WTC11 (cell line): ENCODE measurements at regions of chr14 and their contacts with region 1.

Region 1: GRCh38 chr14:53963320-53964227 is 6.9 kb upstream of the BMP4 start:
- DNase-seq: peak; percentile 55
- ATAC-seq: peak; percentile 68
- H3K4me3 Mint-ChIP-seq: peak overlapping the region; percentile 77
- H3K27ac Mint-ChIP-seq: no peak overlapping the region
- H3K4me1 Mint-ChIP-seq: peaks cover 41% of the 10 kb centered on the region
- H3K27me3 Mint-ChIP-seq: peaks cover 74% of the 10 kb centered on the region
- CTCF ChIP-seq: no peak

Region 2: GRCh38 chr14:53894456-53894855 is 69.1 kb before region 1 on chr14:
- CTCF ChIA-PET with region 1: no interaction called
- POLR2A ChIA-PET with region 1: no interaction called
- DNase-seq: no peak
- ATAC-seq: no peak
- H3K4me3 Mint-ChIP-seq: no peak overlapping the region
- H3K27ac Mint-ChIP-seq: no peak overlapping the region
- H3K4me1 Mint-ChIP-seq: peaks cover 17% of the 10 kb centered on the region
- H3K27me3 Mint-ChIP-seq: peaks cover 2% of the 10 kb centered on the region; the same call in 1 of the 2 replicates
- CTCF ChIP-seq: no peak

Region 3: DNA sequence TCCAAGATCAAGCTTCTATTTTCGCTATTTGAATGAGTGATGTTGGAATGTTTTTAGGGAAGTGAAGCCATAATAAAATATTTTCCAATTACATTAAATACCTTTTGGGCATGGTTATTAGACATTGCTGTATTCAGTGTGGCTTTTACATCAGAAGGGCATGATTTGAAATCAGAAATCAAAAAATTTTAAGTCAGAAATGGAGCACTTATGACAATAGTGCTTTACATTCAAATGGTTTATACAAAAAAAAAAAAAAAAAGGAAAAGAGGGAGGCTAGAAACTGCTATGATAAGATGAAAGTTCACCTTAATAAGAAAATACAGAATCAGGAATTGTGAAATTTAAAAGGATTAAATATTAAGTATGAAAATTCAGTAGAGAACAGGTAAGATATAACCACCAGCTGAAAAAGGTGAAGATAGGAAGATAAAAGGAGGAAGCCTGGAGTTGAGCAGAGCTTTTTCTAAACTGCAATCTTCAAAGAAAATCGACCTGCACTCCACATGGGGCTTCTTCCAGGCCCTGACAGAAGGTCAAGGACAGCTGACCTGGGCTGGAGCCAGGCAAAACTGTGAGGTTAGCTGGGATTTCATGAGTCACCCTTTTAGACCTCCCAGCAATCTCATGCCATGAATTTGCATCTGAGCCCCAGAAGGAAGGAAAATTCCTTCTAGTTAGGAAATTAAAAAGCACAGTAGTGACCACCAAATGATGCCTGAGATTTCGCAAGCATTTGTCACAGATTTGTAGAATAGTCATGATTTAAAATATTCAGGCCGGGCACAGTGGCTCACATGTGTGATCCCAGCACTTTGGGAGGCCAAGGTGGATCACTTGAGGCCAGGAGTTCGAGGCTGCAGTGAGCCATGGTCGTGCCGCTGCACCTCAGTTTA is 16.4 kb after region 1 on chr14:
- CTCF ChIA-PET with region 1: interaction called, 12 read pairs
- POLR2A ChIA-PET with region 1: no interaction called
- DNase-seq: peak; percentile 47
- ATAC-seq: peak; percentile 46
- H3K4me3 Mint-ChIP-seq: no peak overlapping the region; the same call in 1 of the 2 replicates
- H3K27ac Mint-ChIP-seq: peak overlapping the region; percentile 34; the same call in 1 of the 2 replicates
- H3K4me1 Mint-ChIP-seq: peaks cover 66% of the 10 kb centered on the region
- H3K27me3 Mint-ChIP-seq: peaks cover 40% of the 10 kb centered on the region
- CTCF ChIP-seq: no peak

Region 4: GRCh38 chr14:54133896-54134295 is 170.3 kb after region 1 on chr14:
- CTCF ChIA-PET with region 1: no interaction called
- POLR2A ChIA-PET with region 1: no interaction called
- DNase-seq: no peak
- ATAC-seq: no peak
- H3K4me3 Mint-ChIP-seq: no peak overlapping the region
- H3K27ac Mint-ChIP-seq: no peak overlapping the region
- H3K4me1 Mint-ChIP-seq: peaks cover 11% of the 10 kb centered on the region
- H3K27me3 Mint-ChIP-seq: no peaks in the 10 kb centered on the region
- CTCF ChIP-seq: no peak